GM18951 (cell line): ENCODE measurements at regions of chr17 and their contacts with region 1.

Region 1: GRCh38 chr17:28967221-28968140 is 16.2 kb upstream of the PHF12 start:
- POLR2A ChIP-seq: no peak

Region 2: GRCh38 chr17:28760601-28761562 is 206.6 kb before region 1 on chr17:
- in situ Hi-C with region 1: no loop called
- POLR2A ChIP-seq: no peak

Region 3: GRCh38 chr17:29124117-29124924 is 156.8 kb after region 1 on chr17:
- in situ Hi-C with region 1: loop called (anchors 10 kb)
- POLR2A ChIP-seq: no peak

Region 4: GRCh38 chr17:29401258-29401657 is 433.8 kb after region 1 on chr17:
- in situ Hi-C with region 1: no loop called
- POLR2A ChIP-seq: no peak